Tibial artery (tissue), 4 donors: ENCODE measurements at regions of chr11 and their contacts with region 1.

Region 1: GRCh38 chr11:61516675-61517572 is 8.4 kb downstream of the LRRC10B start:
- DNase-seq: no peak
- H3K4me3 ChIP-seq: peak overlapping the region; percentile 4 to 5
- H3K27ac ChIP-seq: peak overlapping the region; percentile 2 to 18
- H3K4me1 ChIP-seq: peaks cover 0 to 37% (median 26%) of the 10 kb centered on the region in 4 donors
- H3K27me3 ChIP-seq: peaks cover 0 to 20% of the 10 kb centered on the region in 2 donors
- CTCF ChIP-seq: peak; percentile 98 to 99

Region 2: DNA sequence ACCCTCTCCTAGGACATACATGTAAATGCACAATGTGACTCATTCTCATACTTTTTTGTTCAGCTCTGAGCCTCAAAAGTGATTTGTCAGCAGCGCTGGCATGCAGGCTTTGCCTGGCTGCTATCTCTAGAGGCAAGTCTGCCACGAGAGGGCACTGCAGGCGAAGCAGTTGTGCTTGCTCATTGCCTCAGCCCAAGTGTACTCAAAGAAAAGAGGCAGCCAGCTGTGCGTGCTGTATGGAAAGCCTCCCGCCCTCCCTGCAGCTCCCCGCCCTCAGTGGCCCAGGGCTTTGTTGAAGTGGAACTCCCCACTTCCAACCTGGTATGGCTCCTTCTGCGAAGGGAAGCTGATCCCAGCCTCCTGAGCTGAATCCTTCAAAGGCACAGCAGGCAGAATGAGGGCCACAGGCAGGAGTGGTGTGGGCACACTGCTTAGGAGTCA is 70.7 kb before region 1 on chr11:
- intact Hi-C with region 1: loop called (anchors 2 kb)
- DNase-seq: peak; percentile 92 to 95
- H3K4me3 ChIP-seq: no peak overlapping the region
- H3K27ac ChIP-seq: peak overlapping the region; percentile 51 to 57
- H3K4me1 ChIP-seq: peaks cover 0 to 42% (median 22%) of the 10 kb centered on the region in 4 donors
- H3K27me3 ChIP-seq: no peaks in the 10 kb centered on the region
- CTCF ChIP-seq: peak; percentile 86 to 91

Region 3: GRCh38 chr11:61477727-61478148 is 39.2 kb before region 1 on chr11:
- intact Hi-C with region 1: loop called (anchors 2 kb)
- DNase-seq: peak; percentile 38 to 81
- H3K4me3 ChIP-seq: no peak overlapping the region
- H3K27ac ChIP-seq: peak overlapping the region; percentile 55 to 58
- H3K4me1 ChIP-seq: peaks cover 0 to 31% (median 16%) of the 10 kb centered on the region in 4 donors
- H3K27me3 ChIP-seq: peaks cover 0 to 3% of the 10 kb centered on the region in 2 donors
- CTCF ChIP-seq: peak; percentile 90 to 94